RWPE1 (cell line): ENCODE measurements at regions of chr2 and their contacts with region 1.

Region 1: DNA sequence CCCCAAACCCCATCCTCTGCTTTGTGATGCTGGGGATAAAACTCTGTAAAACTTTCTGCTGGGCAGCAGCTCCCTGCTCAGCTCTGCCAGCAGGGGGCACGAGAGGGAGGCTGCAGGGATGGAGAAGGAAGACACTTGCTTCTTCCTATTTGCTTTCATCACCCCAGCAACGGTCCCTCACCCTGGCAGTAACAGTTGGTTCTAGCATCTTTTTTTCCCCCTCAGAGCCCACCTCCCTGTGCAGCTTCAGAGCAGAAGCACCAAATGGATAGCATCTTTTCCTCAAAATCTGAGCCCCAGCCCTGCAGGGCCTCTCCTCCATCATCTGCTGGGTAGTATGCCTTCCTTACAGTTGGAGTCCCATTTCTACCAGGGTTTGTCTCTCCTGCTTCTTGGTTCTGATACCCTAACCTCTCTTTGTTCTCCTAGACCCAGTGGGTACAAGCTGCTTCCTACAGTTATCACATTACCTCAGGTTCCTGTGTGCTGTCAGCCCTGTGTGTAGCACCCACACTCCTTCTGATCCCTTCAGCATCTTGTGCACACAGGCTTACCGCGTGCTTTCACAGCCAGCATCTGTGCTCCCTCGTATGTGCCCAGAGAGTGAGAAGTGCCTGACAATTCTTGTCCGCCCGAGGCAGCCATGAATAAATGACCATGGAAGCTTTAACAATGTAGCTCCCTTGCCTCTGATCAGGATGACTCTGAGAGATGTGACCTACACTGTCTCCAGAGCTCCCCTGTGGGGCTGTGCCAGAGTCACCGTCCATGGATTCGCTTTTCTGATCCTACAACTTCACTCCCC is 14.5 kb downstream of the CKAP2L start:
- DNase-seq: peak; percentile 62
- H3K27ac ChIP-seq: peak overlapping the region; percentile 60
- CTCF ChIP-seq: peak; percentile 91

Region 2: DNA sequence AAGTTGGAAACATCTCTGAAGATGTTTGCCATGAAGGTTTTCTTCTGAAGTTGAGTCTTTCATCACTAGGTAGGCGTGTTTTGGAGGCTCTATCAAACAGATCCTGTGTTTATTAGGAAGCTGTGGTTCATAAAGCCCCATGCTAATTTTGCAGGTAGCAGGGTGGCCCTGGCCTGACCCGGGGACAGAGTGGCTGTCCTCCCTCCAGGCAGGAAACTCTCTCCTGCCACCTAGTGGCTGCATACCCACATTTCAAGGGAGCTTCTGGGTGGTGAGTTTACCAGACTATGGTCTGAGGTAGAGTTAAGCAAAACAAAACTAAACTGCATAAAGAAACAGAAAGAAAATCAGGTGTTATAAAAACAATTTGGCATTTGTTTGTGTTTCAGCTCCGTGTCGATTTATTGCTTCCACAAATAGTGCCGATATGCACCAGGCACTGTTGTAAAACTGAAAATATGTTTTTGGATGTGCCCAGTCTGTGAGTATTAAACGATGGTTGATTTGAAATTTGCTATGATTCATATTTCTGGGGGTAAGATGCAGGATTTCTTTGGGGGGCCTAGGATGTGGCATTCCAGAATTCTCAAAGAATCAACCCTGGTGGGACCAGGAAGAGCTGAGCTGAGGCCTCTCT is 135.0 kb after region 1 on chr2:
- CTCF ChIA-PET with region 1: interaction called, 10 read pairs
- POLR2A ChIA-PET with region 1: no interaction called
- DNase-seq: peak; percentile 66
- H3K27ac ChIP-seq: peak overlapping the region; percentile 36; the same call in 1 of the 2 replicates
- CTCF ChIP-seq: peak; percentile 71

Region 3: GRCh38 chr2:112941753-112942658 is 192.0 kb after region 1 on chr2:
- CTCF ChIA-PET with region 1: interaction called, 18 read pairs
- POLR2A ChIA-PET with region 1: no interaction called
- DNase-seq: peak; percentile 63
- H3K27ac ChIP-seq: peak overlapping the region; percentile 45
- CTCF ChIP-seq: peak; percentile 86